ENCODE measurements at regions of chr17 and their contacts with region 1.

Region 1: DNA sequence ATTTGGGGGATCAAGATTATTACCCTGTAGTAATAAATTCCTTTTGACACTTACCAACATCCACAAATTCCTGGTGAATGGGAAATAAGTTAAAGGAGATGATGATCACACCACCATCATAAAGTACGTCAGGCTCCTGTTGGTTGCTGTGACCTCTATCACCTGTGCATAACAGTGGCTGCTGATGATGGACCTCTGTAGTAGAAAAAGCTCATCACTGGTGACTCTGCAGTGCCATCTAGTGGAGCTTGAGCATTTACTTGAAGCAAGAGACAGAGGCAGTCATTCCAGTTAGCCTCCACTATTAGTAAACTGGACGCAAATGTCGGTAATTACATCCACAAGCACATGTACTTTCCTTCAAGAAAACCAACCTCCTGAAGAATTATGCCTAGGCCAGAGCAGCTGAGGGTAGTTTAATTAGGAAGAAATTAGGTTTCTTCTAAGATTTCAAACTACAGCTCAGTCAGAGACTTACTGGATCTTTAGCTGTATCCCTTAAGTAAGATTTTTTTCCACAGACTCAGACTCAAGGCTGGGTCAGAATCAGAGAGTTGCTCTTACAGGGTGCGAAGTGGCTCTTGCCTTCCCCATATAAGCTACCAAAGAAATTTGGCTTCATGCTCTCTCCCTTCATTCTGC is 39.3 kb downstream of the CYB561 start:
- DNase-seq: no peak
- H3K4me3 ChIP-seq: no peak overlapping the region
- H3K27ac ChIP-seq: no peak overlapping the region
- H3K4me1 ChIP-seq: peaks cover 0 to 8% (median 0%) of the 10 kb centered on the region in 6 donors
- H3K27me3 ChIP-seq: no peaks in the 10 kb centered on the region
- CTCF ChIP-seq: peak; percentile 43 to 85 (median 80)
- POLR2A ChIP-seq: no peak

Region 2: GRCh38 chr17:63082273-63082993 is 324.4 kb before region 1 on chr17:
- intact Hi-C with region 1: loop called (anchors 10 kb)
- DNase-seq: no peak
- H3K4me3 ChIP-seq: no peak overlapping the region
- H3K27ac ChIP-seq: no peak overlapping the region
- H3K4me1 ChIP-seq: no peaks in the 10 kb centered on the region
- H3K27me3 ChIP-seq: no peaks in the 10 kb centered on the region
- CTCF ChIP-seq: peak in 6 of 11 experiments; percentile 15 to 34 (median 20)
- POLR2A ChIP-seq: no peak

Region 3: DNA sequence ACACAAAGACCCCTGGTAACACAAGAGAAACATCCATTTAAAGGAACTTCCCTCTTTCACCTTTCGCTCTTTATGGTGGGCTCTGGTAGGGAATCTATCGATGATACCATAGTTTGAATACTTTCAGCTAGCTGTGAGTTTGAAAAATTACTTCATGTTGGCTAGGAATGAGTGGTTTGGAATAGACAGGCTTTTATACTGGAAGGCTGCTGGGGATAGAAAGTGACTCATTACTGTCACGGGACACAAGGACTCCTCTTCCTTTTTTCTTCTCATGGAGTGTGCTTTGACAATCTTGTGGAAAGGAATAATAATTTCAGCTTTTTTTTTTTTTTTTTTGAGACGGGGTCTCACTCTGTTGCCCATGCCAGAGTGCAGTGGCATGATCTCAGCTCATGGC is 37.6 kb before region 1 on chr17:
- intact Hi-C with region 1: no loop called
- DNase-seq: no peak
- H3K4me3 ChIP-seq: no peak overlapping the region
- H3K27ac ChIP-seq: no peak overlapping the region
- H3K4me1 ChIP-seq: no peaks in the 10 kb centered on the region
- H3K27me3 ChIP-seq: no peaks in the 10 kb centered on the region
- CTCF ChIP-seq: no peak
- POLR2A ChIP-seq: no peak

Measured in spleen (tissue), 13 donors.